Heart right ventricle (tissue), 16 donors: ENCODE measurements at regions of chr1 and their contacts with region 1.

Region 1: GRCh38 chr1:216723274-216723780 is at the start of gene ESRRG:
- DNase-seq: peak; percentile 56 to 71
- ATAC-seq: peak; percentile 89 to 98 (median 96)
- H3K4me3 ChIP-seq: peak within 1 kb of the TSS; percentile 12 to 57 (median 45)
- H3K27ac ChIP-seq: peak within 1 kb of the TSS in 9 of 10 donors; percentile 29 to 67 (median 50)
- H3K4me1 ChIP-seq: peaks cover 0 to 8% (median 0%) of the 10 kb centered on the region in 9 donors
- H3K27me3 ChIP-seq: peaks cover 0 to 51% (median 28%) of the 10 kb centered on the region in 7 donors
- CTCF ChIP-seq: no peak
- total RNA-seq, gene ESRRG: 24.3 to 49.5 (median 36.7) TPM

Region 2: DNA sequence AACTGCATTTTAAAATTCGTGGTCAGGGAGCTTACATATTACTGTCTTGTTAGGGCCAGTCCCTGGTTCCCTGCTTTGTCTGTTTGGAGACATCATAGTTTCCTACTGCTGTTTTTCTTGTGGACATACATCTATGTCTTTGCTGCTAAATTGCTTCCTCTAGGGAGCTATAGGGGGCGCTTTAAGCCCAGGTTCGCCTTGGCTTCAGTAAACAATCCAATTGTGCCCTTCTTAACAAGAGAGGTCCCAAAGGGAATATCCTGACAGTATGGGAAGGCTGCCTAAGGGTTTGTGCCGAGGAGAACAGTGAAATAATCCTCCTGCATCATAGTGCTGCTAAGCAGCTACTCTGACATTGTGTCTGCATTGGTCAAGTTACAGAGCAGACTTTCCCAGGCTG is 412.6 kb before region 1 on chr1:
- intact Hi-C with region 1: loop called in 1 of 10 experiments (anchors 10 kb)
- DNase-seq: peak in 1 of 2 donors; percentile 7
- ATAC-seq: peak in 1 of 8 donors; percentile 39
- H3K4me3 ChIP-seq: no peak overlapping the region
- H3K27ac ChIP-seq: no peak overlapping the region
- H3K4me1 ChIP-seq: no peaks in the 10 kb centered on the region
- H3K27me3 ChIP-seq: no peaks in the 10 kb centered on the region
- CTCF ChIP-seq: peak in 8 of 9 donors; percentile 8 to 56 (median 48)

Region 3: DNA sequence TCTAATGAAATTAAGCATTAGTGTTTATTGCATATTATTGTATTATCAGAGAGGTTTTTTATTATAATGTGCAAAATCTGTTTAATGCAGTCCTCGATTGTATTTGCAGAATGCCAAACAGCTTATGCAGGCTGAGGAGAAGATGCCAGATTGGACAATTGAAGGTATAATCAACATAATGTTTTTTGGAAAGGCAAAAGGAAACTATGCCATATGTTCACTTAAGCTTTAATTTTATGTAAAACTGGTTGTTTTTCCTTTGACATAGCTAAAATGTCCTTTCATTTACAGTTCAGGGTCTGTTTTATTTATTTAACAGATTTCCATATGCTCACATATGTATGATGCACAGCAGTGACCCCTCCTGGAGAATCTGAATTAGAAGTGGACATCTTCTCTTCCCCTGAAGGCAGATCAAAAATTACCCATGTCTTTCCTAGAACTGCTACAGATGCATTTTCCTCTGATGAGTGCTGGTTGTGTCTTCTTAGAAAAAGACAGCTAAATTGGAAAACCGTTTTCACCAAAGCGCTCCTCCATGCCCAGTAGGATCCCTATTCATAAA is 156.6 kb before region 1 on chr1:
- intact Hi-C with region 1: no loop called
- DNase-seq: no peak
- ATAC-seq: no peak
- H3K4me3 ChIP-seq: no peak overlapping the region
- H3K27ac ChIP-seq: no peak overlapping the region
- H3K4me1 ChIP-seq: no peaks in the 10 kb centered on the region
- H3K27me3 ChIP-seq: no peaks in the 10 kb centered on the region
- CTCF ChIP-seq: no peak